AG04450 (cell line): ENCODE measurements at regions of chr17 and their contacts with region 1.

Region 1: DNA sequence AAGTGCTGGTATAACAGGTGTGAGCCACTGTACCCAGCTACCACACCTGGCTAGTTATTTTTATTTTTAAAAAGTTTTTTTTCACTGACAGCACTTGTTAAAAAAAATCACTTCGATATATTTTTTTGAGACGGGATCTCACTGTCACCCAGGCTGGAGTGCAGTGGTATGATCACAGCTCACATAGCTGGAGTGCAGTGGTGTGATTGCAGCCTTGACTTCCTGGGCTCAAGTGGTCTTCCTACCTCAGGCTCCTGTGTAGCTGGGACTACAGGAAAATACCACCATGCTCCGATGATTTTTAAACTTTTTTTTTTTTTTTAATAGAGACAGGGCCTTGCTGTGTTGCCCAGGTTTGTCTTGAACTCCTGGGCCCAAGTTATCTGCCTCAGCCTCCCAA is 12.9 kb downstream of the NBR1 start:
- DNase-seq: no peak
- H3K4me3 ChIP-seq: no peak overlapping the region
- H3K27ac ChIP-seq: no peak overlapping the region
- H3K27me3 ChIP-seq: no peaks in the 10 kb centered on the region
- CTCF ChIP-seq: no peak

Region 2: DNA sequence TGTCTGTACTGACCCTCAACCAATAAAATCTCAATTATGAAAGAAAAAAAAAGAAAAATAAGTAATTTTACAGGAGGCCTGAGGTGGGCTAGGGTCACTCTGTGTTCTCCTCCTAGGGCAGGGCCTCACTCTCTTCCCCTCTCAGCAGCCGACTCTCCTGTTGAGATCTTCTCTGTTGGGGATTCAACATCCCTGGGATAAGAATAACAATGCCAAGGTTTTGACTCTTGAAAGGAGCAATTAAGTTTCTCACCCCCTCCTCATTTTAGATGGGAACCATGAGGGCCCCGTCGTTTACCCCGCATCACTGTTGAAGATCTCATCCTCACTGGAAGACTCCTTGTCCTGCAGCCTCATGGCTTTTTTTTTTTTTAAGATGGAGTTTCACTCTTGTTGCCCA is 37.3 kb before region 1 on chr17:
- CTCF ChIA-PET with region 1: no interaction called
- POLR2A ChIA-PET with region 1: no interaction called
- DNase-seq: no peak
- H3K4me3 ChIP-seq: no peak overlapping the region
- H3K27ac ChIP-seq: peak overlapping the region; percentile 11
- H3K27me3 ChIP-seq: no peaks in the 10 kb centered on the region
- CTCF ChIP-seq: no peak

Region 3: GRCh38 chr17:43200127-43200526 is 16.2 kb after region 1 on chr17:
- CTCF ChIA-PET with region 1: interaction called, 10 read pairs
- POLR2A ChIA-PET with region 1: no interaction called
- DNase-seq: no peak
- H3K4me3 ChIP-seq: no peak overlapping the region
- H3K27ac ChIP-seq: peak overlapping the region; percentile 11
- H3K27me3 ChIP-seq: no peaks in the 10 kb centered on the region
- CTCF ChIP-seq: no peak